ENCODE measurements at regions of chrX and their contacts with region 1.

Region 1: GRCh38 chrX:38192007-38192810 is 28.5 kb downstream of the SRPX start:
- DNase-seq: peak; percentile 35
- ATAC-seq: no peak

Region 2: GRCh38 chrX:38095971-38096529 is 96.2 kb before region 1 on chrX:
- intact Hi-C with region 1: no loop called
- DNase-seq: no peak
- ATAC-seq: no peak

Region 3: GRCh38 chrX:38151441-38151840 is 40.8 kb before region 1 on chrX:
- intact Hi-C with region 1: no loop called
- DNase-seq: no peak
- ATAC-seq: no peak

Region 4: DNA sequence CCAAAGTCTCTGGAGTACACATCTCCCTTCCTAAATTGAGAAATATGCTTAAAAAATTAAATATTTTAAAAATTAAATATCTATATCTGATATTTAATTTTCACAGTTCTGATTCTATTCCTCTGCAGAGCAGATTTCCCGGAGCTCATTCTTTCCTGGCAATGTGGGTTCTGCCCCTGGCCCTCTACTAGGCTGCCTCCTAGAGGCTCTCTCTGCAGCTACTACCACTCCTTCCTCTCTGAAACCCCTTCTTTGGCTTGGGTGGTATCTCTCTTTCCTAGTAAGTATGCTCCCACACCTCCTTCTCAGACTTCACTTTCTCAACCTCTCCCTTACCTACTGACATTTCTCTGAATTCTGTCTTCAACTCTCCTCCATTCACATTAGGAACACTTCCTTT is 89.8 kb after region 1 on chrX:
- intact Hi-C with region 1: loop called (anchors 2 kb)
- DNase-seq: no peak
- ATAC-seq: peak; percentile 57

Measured in Right ventricle myocardium inferior (tissue), 1 donor.